Astrocyte of the cerebellum (primary cell): ENCODE measurements at regions of chr15 and their contacts with region 1.

Region 1: DNA sequence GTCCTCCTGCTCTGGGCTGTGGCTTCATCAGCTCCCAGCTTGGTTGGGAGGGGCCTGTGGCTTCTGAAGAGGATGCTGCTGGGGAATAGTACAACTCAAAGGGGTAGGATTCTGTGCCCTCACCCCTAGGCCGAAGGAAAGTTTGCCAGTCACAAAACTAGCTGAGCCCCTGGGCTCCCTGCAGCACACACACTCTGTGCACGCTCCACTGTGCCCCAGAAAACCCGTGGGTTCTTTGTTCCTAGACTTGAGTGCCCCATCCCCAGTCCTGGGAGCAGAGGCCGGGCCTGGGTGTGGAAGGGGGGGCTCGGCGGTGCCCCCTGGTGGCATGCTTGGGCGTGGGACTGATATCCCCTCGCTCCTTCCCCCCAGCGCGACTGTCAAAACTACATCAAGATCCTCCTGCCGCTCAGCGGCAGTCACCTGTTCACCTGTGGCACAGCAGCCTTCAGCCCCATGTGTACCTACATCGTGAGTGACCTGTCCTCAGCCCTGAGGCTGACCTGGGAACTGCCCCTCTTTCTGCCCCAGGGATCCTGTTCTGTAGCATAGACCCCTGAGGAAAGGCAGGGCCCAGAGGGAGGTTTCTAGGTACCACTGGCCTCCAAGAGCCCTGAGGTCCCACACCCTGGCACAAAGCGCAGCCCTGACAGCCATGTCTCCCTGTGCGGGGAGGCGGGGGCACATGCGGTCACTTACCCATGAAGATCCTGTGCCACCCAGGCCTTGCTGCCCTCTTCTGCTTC is 14.1 kb downstream of the CIB1 start:
- DNase-seq: no peak
- H3K4me3 ChIP-seq: no peak overlapping the region
- CTCF ChIP-seq: peak; percentile 82

Region 2: DNA sequence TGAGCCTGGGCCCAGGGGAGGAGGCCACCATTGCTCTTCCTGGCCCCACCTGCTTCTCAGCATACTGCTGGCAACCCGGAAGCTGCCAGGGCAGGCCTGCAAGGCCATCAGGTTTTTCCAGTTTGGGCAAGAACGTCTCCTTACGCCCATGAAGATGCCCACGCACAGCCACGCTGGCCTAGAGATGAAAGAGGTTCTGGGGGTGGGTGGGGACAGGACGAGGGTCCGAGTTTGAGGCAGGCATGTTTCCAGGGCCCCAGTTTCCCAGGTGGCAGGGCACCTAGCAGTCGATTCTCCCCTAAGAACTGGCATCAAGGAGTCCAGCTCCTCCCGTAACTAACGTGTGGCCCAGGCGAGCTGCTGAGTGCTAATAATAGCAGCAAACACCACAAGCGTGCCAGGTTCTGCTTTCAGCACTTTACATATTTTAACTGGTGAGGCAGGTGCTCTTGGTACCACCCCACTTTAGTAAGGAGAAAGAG is 172.6 kb before region 1 on chr15:
- in situ Hi-C with region 1: loop called (anchors 5 kb)
- DNase-seq: no peak
- H3K4me3 ChIP-seq: no peak overlapping the region
- CTCF ChIP-seq: no peak

Region 3: GRCh38 chr15:90154861-90155626 is 64.5 kb before region 1 on chr15:
- in situ Hi-C with region 1: loop called (anchors 5 kb)
- DNase-seq: peak; percentile 12
- H3K4me3 ChIP-seq: no peak overlapping the region
- CTCF ChIP-seq: no peak